ENCODE measurements at regions of chr12 and their contacts with region 1.

Region 1: GRCh38 chr12:123398550-123399254 is 14.8 kb downstream of the KMT5A start:
- DNase-seq: peak; percentile 76
- H3K4me3 ChIP-seq: no peak overlapping the region
- H3K27ac ChIP-seq: peak overlapping the region; percentile 87 to 94
- H3K4me1 ChIP-seq: peaks cover 13% of the 10 kb centered on the region
- H3K27me3 ChIP-seq: no peaks in the 10 kb centered on the region
- CTCF ChIP-seq: no peak
- POLR2A ChIP-seq: no peak

Region 2: GRCh38 chr12:123163227-123163626 is 235.5 kb before region 1 on chr12:
- intact Hi-C with region 1: no loop called
- DNase-seq: no peak
- H3K4me3 ChIP-seq: no peak overlapping the region
- H3K27ac ChIP-seq: no peak overlapping the region
- H3K4me1 ChIP-seq: no peaks in the 10 kb centered on the region
- H3K27me3 ChIP-seq: no peaks in the 10 kb centered on the region
- CTCF ChIP-seq: no peak
- POLR2A ChIP-seq: no peak

Region 3: DNA sequence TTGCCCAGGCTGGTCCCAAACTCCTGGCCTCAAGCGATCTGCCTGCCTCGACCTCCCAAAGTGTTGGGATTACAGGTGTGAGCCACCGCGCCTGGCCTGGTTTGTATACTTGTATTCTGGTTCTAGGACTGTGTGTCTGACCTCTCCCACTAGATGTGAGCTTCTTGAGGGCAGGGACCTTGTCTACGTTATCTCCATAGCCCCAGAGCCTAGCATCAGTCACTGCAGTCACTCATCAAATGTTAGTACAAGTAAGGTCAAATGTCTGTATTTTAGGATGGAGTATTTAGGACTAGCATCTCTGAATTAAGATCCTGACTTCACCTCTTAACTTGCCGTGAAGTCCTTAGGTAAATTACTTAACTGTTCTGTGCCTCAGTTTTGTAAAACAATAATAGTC is 34.9 kb after region 1 on chr12:
- intact Hi-C with region 1: loop called (anchors 5 kb)
- DNase-seq: no peak
- H3K4me3 ChIP-seq: no peak overlapping the region
- H3K27ac ChIP-seq: peak overlapping the region; percentile 4 to 35
- H3K4me1 ChIP-seq: peaks cover 6% of the 10 kb centered on the region
- H3K27me3 ChIP-seq: no peaks in the 10 kb centered on the region
- CTCF ChIP-seq: no peak
- POLR2A ChIP-seq: no peak

Measured in prostate gland (tissue), 2 donors.